ENCODE measurements at regions of chr14 and their contacts with region 1.

Region 1: DNA sequence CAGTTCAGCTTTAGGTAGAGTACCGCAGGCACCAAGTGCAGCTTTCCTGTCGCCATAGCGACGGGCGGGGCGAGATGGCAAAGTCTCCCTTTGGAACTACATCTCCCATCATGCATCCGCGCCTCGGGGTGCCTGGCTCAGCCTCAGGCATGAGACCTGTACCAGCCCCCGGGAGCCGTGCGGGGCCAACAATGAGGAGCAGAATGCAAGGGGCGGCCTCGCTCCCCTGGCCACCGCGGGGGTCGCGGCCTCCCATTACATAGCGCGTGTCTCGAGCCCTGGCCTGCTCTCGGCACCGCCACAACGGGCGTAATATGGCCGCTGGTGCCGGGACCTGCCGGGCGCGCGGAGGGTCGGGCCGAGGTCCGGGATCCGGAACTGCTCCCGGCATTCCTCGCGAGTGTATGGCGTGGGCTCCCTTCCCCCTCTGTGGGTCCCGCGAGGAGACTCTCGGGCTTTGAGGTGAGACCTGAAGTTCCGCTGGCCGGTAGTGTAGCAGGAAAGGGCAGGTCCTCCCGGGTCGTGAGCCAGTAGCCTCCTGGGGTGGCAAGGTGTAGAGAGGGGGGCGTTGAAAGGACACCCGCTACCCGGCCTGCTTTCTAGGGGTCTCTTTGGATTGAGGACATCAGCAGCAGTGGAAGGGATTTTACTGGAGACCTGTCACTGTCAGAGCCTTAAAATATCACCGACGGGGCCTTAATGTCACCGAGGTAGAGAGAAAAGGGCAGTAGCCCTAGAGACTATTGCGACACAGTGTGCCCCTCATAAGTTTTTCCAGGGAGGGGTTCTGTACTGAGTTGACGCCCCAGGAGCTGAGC is at the start of gene THTPA:
- DNase-seq: peak; percentile 98
- H3K4me3 Mint-ChIP-seq: peak within 1 kb of the TSS; percentile 95
- H3K27ac Mint-ChIP-seq: peak within 1 kb of the TSS; percentile 98
- H3K4me1 Mint-ChIP-seq: peaks cover 30% of the 10 kb centered on the region
- H3K27me3 Mint-ChIP-seq: no peaks in the 10 kb centered on the region
- total RNA-seq, gene THTPA: 14.5 and 16.7 TPM in 2 replicates

Region 2: GRCh38 chr14:22829661-22830442 is 726.2 kb before region 1 on chr14 and contains the start of gene MRPL52:
- intact Hi-C with region 1: no loop called
- DNase-seq: peak; percentile 96
- H3K4me3 Mint-ChIP-seq: peak within 1 kb of the TSS; percentile 98
- H3K27ac Mint-ChIP-seq: peak within 1 kb of the TSS; percentile 95
- H3K4me1 Mint-ChIP-seq: peaks cover 19% of the 10 kb centered on the region
- H3K27me3 Mint-ChIP-seq: no peaks in the 10 kb centered on the region
- total RNA-seq, gene MRPL52: 189 and 194 TPM in 2 replicates

Region 3: GRCh38 chr14:23320774-23321571 is 235.1 kb before region 1 on chr14 and contains the start of gene PABPN1:
- intact Hi-C with region 1: loop called (anchors 1 kb)
- DNase-seq: peak; percentile 99
- H3K4me3 Mint-ChIP-seq: peak within 1 kb of the TSS; percentile 90
- H3K27ac Mint-ChIP-seq: peak within 1 kb of the TSS; percentile 98
- H3K4me1 Mint-ChIP-seq: peaks cover 24% of the 10 kb centered on the region
- H3K27me3 Mint-ChIP-seq: no peaks in the 10 kb centered on the region
- total RNA-seq, gene PABPN1: 277 and 278 TPM in 2 replicates

Region 4: GRCh38 chr14:23406244-23406643 is 149.8 kb before region 1 on chr14:
- intact Hi-C with region 1: no loop called
- DNase-seq: no peak
- H3K4me3 Mint-ChIP-seq: no peak overlapping the region
- H3K27ac Mint-ChIP-seq: no peak overlapping the region
- H3K4me1 Mint-ChIP-seq: no peaks in the 10 kb centered on the region
- H3K27me3 Mint-ChIP-seq: peaks cover 4% of the 10 kb centered on the region

Region 5: DNA sequence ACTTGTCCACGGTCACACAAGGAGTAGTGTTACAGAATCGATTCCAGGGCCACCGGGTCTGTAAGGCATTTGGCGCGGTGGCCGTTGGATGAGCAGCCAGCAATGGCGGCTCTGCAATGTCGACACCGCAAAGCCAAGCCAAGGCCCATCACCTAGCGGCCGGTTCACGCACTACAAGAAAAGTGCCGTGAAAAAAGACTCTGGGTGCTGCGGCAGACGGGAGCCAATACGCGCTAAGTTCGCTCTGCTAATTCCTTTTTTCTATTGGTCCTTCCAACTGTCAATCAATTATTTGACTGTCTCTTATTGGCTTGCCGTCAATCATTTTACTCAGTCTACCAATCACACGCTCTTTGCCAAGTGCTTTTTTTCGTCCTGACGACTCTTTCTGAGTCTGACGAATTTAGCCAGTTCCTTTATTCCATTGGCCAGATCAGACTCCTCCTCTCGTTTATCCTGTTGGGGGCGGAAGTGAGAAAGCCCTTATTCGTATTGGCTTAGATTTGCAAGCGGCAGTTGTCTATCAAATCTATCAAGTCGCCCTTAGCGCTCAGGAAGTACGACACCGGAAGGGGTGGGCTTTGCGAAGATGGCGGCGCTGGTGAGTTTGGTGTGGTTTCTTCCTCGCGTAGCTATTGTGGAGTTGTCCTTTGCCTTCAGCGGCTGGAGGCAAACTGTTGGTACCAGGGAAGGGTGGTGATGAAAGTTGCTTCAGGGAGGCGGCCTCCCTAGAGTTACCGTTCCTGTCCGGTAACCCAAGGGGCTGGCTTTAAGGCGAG is 86.8 kb before region 1 on chr14 and contains the start of gene NGDN:
- intact Hi-C with region 1: loop called (anchors 1 kb)
- DNase-seq: peak; percentile 98
- H3K4me3 Mint-ChIP-seq: no peak within 1 kb of the TSS
- H3K27ac Mint-ChIP-seq: no peak within 1 kb of the TSS
- H3K4me1 Mint-ChIP-seq: peaks cover 9% of the 10 kb centered on the region
- H3K27me3 Mint-ChIP-seq: no peaks in the 10 kb centered on the region
- total RNA-seq, gene NGDN: 78.6 and 79.2 TPM in 2 replicates

Region 6: DNA sequence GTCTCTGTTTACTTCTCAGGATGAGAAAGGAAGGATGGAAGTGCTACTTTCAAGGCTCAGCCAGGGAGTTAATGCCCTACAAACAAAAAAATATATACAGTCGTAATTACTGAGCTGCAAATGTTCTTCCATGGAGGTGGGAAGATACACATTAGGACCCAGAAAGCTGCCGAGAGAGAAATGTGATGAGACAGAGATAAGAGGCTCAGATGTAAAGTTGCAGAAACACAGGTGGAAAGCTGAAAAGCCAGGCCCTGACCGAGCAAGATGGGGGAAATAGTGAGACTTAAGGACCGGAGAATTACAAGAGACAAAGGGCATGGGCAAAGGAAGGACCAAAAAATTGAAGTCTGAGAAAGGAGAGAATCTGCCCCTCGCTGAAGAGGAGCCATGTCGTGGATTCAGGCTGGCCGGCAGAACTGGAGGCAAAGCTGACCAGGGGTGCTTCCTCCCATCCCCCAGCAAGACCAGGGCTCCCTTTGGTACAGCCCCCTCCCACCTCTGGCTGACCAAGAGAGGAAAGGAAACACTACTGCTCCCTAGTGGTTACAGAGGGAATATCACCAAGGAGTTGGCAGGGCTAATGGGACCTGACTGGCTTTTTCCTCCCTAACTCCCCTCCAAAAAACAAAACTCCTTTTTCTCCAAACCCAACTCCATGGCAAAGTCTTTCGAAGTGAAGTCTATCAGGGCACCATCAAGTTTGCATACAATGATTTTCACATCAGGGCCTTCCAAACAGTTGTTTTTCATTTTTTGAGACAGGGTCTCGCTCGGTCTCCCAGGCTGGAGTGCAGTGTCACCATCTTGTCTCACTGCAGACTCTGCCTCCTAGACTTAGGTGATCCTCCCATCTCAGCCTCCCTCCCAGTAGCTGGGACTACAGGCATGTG is 16.6 kb before region 1 on chr14:
- intact Hi-C with region 1: no loop called
- DNase-seq: peak; percentile 82
- H3K4me3 Mint-ChIP-seq: no peak overlapping the region
- H3K27ac Mint-ChIP-seq: no peak overlapping the region
- H3K4me1 Mint-ChIP-seq: peaks cover 6% of the 10 kb centered on the region
- H3K27me3 Mint-ChIP-seq: no peaks in the 10 kb centered on the region

Region 7: GRCh38 chr14:23567192-23568020 is 11.3 kb after region 1 on chr14 and contains the start of gene AP1G2:
- intact Hi-C with region 1: loop called (anchors 2 kb)
- DNase-seq: peak; percentile 97
- H3K4me3 Mint-ChIP-seq: peak within 1 kb of the TSS; percentile 99
- H3K27ac Mint-ChIP-seq: peak within 1 kb of the TSS; percentile 98
- H3K4me1 Mint-ChIP-seq: peaks cover 35% of the 10 kb centered on the region
- H3K27me3 Mint-ChIP-seq: peaks cover under 1% of the 10 kb centered on the region
- total RNA-seq, gene AP1G2: 135 and 142 TPM in 2 replicates

Region 8: GRCh38 chr14:24843494-24843893 is 1287.4 kb after region 1 on chr14:
- intact Hi-C with region 1: no loop called
- DNase-seq: no peak
- H3K4me3 Mint-ChIP-seq: no peak overlapping the region
- H3K27ac Mint-ChIP-seq: no peak overlapping the region
- H3K4me1 Mint-ChIP-seq: no peaks in the 10 kb centered on the region
- H3K27me3 Mint-ChIP-seq: peaks cover 17% of the 10 kb centered on the region